ENCODE measurements at regions of chr10 and their contacts with region 1.

Region 1: DNA sequence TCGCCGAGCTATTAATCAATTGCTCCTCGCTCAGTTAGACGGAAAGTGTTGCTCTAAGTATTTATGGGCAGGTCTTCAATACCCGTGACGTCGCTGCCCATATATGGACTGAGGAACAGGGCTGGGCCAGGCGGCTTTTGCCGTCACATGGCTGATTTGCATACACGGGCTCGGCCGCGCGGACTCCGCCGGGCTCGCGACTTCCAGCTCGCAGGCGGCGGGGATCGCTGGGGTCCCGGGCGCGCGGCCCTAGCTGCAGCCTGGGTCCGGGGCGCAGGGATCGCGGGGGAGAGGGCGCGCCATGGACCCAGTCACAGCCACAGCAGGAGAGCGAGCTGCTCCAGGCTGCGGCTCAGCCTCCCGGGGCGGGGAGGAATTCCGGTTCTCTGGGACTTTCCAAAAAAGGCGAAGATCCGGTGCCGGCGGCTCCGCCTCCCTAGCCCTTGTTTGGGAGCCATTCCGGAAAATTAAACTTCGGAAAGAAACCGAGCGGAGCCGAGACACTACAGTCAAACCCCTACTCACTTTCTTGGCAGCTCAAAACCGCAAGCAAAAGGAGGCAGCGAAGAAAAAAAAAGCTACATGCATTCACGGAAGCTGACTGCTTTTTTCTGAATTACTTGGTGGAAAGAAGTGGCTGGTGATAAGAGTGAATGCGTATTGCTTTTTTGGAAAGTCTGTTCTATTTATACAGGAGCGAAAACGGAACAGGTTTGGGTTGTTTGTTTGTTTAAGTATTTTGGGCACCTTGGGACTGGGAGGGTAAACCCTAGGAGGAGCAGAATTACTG is at the start of gene EGR2:
- DNase-seq: peak; percentile 96
- ATAC-seq: peak; percentile 75
- H3K4me3 Mint-ChIP-seq: peak within 1 kb of the TSS; percentile 92
- H3K27ac Mint-ChIP-seq: peak within 1 kb of the TSS; percentile 94
- H3K4me1 Mint-ChIP-seq: peaks cover 56% of the 10 kb centered on the region
- H3K27me3 Mint-ChIP-seq: peaks cover 8% of the 10 kb centered on the region
- CTCF ChIP-seq: no peak
- total RNA-seq, gene EGR2: 6.1 and 9.4 TPM in 2 replicates

Region 2: DNA sequence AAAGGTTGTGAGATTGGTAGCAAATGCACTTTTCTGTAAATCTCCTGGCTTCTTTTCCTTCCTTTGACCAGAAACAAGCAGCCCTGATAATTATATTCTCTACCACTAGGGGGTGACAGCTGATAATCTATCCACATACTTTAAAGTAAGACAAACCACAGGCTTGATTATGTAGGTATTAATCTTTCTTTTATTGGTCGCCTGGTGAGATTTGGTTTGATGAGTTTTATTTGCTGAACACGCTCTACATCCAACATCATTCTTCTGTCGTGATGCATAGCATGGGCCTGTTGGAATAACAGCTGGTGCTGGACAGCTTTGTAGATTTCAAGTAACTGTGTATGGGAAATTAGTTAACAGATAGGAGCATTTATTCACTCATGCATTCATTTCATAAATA is 378.8 kb before region 1 on chr10:
- CTCF ChIA-PET with region 1: interaction called, 32 read pairs
- POLR2A ChIA-PET with region 1: no interaction called
- intact Hi-C with region 1: loop called (anchors 1 kb)
- DNase-seq: no peak
- ATAC-seq: peak; percentile 70
- H3K4me3 Mint-ChIP-seq: no peak overlapping the region
- H3K27ac Mint-ChIP-seq: no peak overlapping the region
- H3K4me1 Mint-ChIP-seq: peaks cover 2% of the 10 kb centered on the region
- H3K27me3 Mint-ChIP-seq: no peaks in the 10 kb centered on the region
- CTCF ChIP-seq: peak; percentile 90

Region 3: GRCh38 chr10:62594093-62594520 is 222.4 kb before region 1 on chr10:
- CTCF ChIA-PET with region 1: interaction called, 36 read pairs
- POLR2A ChIA-PET with region 1: interaction called, 4 read pairs
- intact Hi-C with region 1: loop called (anchors 1 kb)
- DNase-seq: peak; percentile 41
- ATAC-seq: peak; percentile 88
- H3K4me3 Mint-ChIP-seq: no peak overlapping the region
- H3K27ac Mint-ChIP-seq: no peak overlapping the region
- H3K4me1 Mint-ChIP-seq: peaks cover 16% of the 10 kb centered on the region
- H3K27me3 Mint-ChIP-seq: no peaks in the 10 kb centered on the region
- CTCF ChIP-seq: peak; percentile 74

Region 4: GRCh38 chr10:62653254-62653653 is 163.3 kb before region 1 on chr10:
- CTCF ChIA-PET with region 1: interaction called, 3 read pairs
- POLR2A ChIA-PET with region 1: interaction called, 4 read pairs
- intact Hi-C with region 1: loop called (anchors 1 kb)
- DNase-seq: no peak
- ATAC-seq: peak; percentile 92
- H3K4me3 Mint-ChIP-seq: peak overlapping the region; percentile 55
- H3K27ac Mint-ChIP-seq: peak overlapping the region; percentile 87
- H3K4me1 Mint-ChIP-seq: peaks cover 66% of the 10 kb centered on the region
- H3K27me3 Mint-ChIP-seq: peaks cover 1% of the 10 kb centered on the region
- CTCF ChIP-seq: no peak

Region 5: GRCh38 chr10:62779487-62780248 is 36.9 kb before region 1 on chr10:
- CTCF ChIA-PET with region 1: interaction called, 5 read pairs
- POLR2A ChIA-PET with region 1: interaction called, 9 read pairs
- intact Hi-C with region 1: loop called (anchors 1 kb)
- DNase-seq: peak; percentile 40
- ATAC-seq: peak; percentile 99
- H3K4me3 Mint-ChIP-seq: peak overlapping the region; percentile 50
- H3K27ac Mint-ChIP-seq: peak overlapping the region; percentile 76
- H3K4me1 Mint-ChIP-seq: peaks cover 33% of the 10 kb centered on the region
- H3K27me3 Mint-ChIP-seq: no peaks in the 10 kb centered on the region
- CTCF ChIP-seq: no peak

Region 6: GRCh38 chr10:63268798-63269503 is 452.4 kb after region 1 on chr10:
- CTCF ChIA-PET with region 1: no interaction called
- POLR2A ChIA-PET with region 1: no interaction called
- intact Hi-C with region 1: loop called (anchors 5 kb)
- DNase-seq: peak; percentile 52
- ATAC-seq: peak; percentile 89
- H3K4me3 Mint-ChIP-seq: peak overlapping the region; percentile 99
- H3K27ac Mint-ChIP-seq: peak overlapping the region; percentile 98
- H3K4me1 Mint-ChIP-seq: peaks cover 35% of the 10 kb centered on the region
- H3K27me3 Mint-ChIP-seq: no peaks in the 10 kb centered on the region
- CTCF ChIP-seq: no peak

Measured in activated B cell treated with CpG ODN at 0.5 μM for 24 hours (primary cell).